ENCODE measurements at regions of chr22 and their contacts with region 1.

Region 1: DNA sequence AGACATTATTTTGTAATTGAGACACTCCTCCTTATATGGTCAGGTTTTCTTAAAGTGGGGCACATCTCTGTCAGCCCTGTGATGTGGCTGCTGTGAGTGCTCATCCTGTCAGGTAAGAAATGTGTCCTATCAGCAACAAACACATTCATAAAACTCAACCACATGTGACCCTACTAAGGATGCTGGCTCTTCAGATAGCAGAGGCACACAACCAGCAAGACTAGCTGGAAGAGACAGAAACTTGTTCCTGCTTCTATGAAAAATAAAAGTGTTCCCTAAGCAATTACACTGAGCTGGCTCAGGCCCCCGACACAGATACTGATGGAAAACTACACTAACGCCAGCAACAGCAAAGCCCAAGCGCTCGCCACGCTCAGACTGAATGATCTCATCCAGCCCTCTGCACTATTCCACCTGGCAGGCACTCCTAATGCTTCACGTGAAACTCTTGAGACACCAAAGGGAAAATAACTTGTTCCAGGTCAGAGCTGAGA is 49.8 kb upstream of the CYP2D6 start:
- DNase-seq: peak; percentile 72
- ATAC-seq: peak; percentile 80
- H3K4me3 Mint-ChIP-seq: peak overlapping the region; percentile 42
- H3K27ac Mint-ChIP-seq: peak overlapping the region; percentile 80
- H3K4me1 Mint-ChIP-seq: peaks cover 90% of the 10 kb centered on the region
- H3K27me3 Mint-ChIP-seq: no peaks in the 10 kb centered on the region

Region 2: GRCh38 chr22:42202669-42203068 is 22.3 kb after region 1 on chr22:
- CTCF ChIA-PET with region 1: interaction called, 10 read pairs
- POLR2A ChIA-PET with region 1: no interaction called
- intact Hi-C with region 1: loop called in 1 of 2 experiments (anchors 2 kb)
- DNase-seq: peak; percentile 74
- ATAC-seq: peak; percentile 89
- H3K4me3 Mint-ChIP-seq: no peak overlapping the region
- H3K27ac Mint-ChIP-seq: peak overlapping the region; percentile 24
- H3K4me1 Mint-ChIP-seq: peaks cover 53% of the 10 kb centered on the region
- H3K27me3 Mint-ChIP-seq: no peaks in the 10 kb centered on the region

Region 3: DNA sequence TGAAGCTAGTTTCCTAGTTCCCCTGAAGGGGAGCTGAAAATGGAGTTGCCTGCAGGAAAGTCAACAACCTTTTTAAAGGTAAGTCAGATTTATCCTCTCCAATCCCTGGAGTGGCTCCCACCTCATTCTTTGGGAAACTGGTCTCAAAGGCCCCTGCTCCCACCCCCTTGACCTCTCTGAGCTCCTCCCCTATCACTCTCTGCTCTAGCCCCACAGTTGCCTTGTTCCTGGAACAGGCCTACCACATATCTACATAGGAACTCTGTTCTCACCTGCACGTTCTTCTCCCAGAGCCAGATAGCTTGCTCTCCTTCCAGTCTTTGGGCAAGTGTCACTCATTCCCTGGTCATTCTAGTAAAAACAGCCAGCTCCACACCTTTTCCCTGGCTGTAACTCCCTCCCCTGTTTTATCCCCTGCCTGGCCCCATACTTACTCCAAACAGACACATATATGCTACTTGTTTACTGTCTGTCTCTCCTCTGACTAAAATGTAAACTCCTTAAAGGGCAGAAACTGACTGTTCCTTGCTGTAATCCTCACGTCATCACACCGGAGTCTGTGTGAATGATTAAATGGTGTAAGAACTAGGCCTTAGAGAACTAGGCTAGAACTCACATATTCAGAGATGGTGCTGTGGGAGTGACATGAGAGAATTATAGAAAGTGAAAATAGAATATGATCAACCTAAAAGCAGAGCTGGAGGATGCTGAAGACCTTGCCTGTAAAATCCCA is 36.8 kb after region 1 on chr22:
- CTCF ChIA-PET with region 1: interaction called, 5 read pairs
- POLR2A ChIA-PET with region 1: interaction called, 3 read pairs
- intact Hi-C with region 1: loop called (anchors 1 to 2 kb)
- DNase-seq: peak; percentile 55
- ATAC-seq: peak; percentile 94
- H3K4me3 Mint-ChIP-seq: no peak overlapping the region
- H3K27ac Mint-ChIP-seq: peak overlapping the region; percentile 90
- H3K4me1 Mint-ChIP-seq: peaks cover 48% of the 10 kb centered on the region
- H3K27me3 Mint-ChIP-seq: no peaks in the 10 kb centered on the region

Region 4: GRCh38 chr22:42270512-42271417 is 90.4 kb after region 1 on chr22 and contains the start of gene TCF20:
- CTCF ChIA-PET with region 1: no interaction called
- POLR2A ChIA-PET with region 1: no interaction called
- intact Hi-C with region 1: loop called (anchors 2 to 5 kb)
- DNase-seq: peak; percentile 88
- ATAC-seq: peak; percentile 85
- H3K4me3 Mint-ChIP-seq: peak within 1 kb of the TSS; percentile 96
- H3K27ac Mint-ChIP-seq: peak within 1 kb of the TSS; percentile 82
- H3K4me1 Mint-ChIP-seq: peaks cover 30% of the 10 kb centered on the region
- H3K27me3 Mint-ChIP-seq: no peaks in the 10 kb centered on the region
- total RNA-seq, gene TCF20: 64.1 to 68.3 TPM

Region 5: GRCh38 chr22:42444077-42444904 is 263.9 kb after region 1 on chr22:
- CTCF ChIA-PET with region 1: no interaction called
- POLR2A ChIA-PET with region 1: no interaction called
- intact Hi-C with region 1: loop called in 1 of 2 experiments (anchors 5 kb)
- DNase-seq: peak; percentile 88
- ATAC-seq: peak; percentile 69
- H3K4me3 Mint-ChIP-seq: peak overlapping the region; percentile 68
- H3K27ac Mint-ChIP-seq: peak overlapping the region; percentile 78
- H3K4me1 Mint-ChIP-seq: peaks cover 32% of the 10 kb centered on the region
- H3K27me3 Mint-ChIP-seq: no peaks in the 10 kb centered on the region

Measured in activated CD4-positive, alpha-beta T cell treated with anti-CD3 and anti-CD28 coated beads for 36 hours (primary cell).